Stomach (tissue), 19 donors: ENCODE measurements at regions of chr3 and their contacts with region 1.

Region 1: DNA sequence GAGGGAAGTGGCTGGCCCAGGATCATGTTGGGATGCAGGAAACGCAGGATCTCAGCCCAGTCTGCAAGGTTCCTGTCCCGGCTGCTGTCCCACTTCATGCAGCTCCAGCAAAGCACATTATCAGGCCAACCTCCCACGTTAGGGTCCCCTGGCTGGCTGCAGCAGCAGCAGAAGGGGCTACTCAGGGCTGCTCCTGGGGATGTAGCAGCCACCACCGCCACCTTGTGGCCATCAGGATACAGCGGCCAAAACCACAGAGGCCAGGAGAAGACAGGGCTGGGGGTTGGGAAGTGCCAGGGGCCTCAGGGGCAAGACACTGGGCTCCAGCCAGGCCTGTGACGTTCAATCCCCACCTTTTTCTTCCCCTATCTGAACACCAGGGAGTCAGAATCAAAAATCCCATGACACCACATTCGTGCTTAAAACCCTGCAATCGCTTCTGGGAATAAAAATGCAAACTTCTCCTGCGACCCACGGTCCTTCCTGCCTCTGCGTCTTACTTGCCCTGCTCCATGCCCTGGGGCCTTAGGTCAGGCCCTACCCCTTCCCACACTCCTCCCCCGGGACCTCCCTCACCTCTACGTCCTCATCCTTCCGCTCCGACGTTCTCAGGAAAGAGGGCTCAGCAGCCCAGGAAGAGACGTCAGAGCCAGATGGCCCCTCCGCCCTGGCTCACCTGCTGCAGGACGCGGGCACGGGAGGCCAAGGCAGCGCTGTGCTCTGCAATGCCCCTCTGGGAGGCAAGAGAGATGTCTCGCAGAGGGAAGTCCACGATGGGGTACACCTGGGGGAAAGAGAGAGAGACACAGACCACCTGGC is 21.5 kb downstream of the SSUH2 start:
- DNase-seq: peak; percentile 73 to 91
- H3K4me3 ChIP-seq: no peak overlapping the region
- H3K27ac ChIP-seq: no peak overlapping the region
- H3K4me1 ChIP-seq: peaks cover 0 to 17% (median 12%) of the 10 kb centered on the region in 4 donors
- H3K27me3 ChIP-seq: no peaks in the 10 kb centered on the region
- CTCF ChIP-seq: peak in 5 of 7 experiments; percentile 70 to 91 (median 83)
- EP300 ChIP-seq: no peak
- POLR2A ChIP-seq: no peak

Region 2: GRCh38 chr3:8441969-8442559 is 181.0 kb before region 1 on chr3:
- intact Hi-C with region 1: loop called (anchors 5 kb)
- DNase-seq: peak in 1 of 2 donors; percentile 87
- H3K4me3 ChIP-seq: no peak overlapping the region
- H3K27ac ChIP-seq: peak overlapping the region in 2 of 5 donors; percentile 83
- H3K4me1 ChIP-seq: peaks cover 23 to 42% (median 35%) of the 10 kb centered on the region in 4 donors
- H3K27me3 ChIP-seq: no peaks in the 10 kb centered on the region
- CTCF ChIP-seq: peak in 5 of 7 experiments; percentile 60 to 83 (median 76)
- EP300 ChIP-seq: no peak
- POLR2A ChIP-seq: no peak

Region 3: DNA sequence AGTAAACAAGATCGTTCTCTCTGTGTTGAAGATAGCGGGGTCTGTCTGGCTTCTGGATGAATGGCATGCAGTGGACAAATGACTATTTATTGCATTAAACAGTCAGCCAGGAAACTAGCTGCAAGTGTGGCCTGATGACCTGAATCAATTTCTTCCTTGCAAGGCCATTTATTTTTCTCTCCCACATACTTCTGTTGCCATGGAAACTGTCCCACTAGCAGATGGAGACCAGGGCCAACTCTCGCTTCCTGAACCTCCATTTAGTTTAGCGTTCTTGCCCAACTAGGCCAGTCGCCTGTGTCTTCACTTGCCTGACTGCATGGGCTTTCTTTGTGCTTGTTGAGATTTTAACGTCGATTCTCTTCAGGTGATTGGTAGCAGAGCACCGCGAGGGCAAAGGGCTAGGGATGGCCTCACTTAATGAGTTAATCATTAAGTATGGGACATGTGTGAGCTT is 93.9 kb before region 1 on chr3:
- intact Hi-C with region 1: no loop called
- DNase-seq: peak in 1 of 2 donors; percentile 80
- H3K4me3 ChIP-seq: no peak overlapping the region
- H3K27ac ChIP-seq: peak overlapping the region in 4 of 5 donors; percentile 43 to 75 (median 52)
- H3K4me1 ChIP-seq: peaks cover 27 to 39% (median 29%) of the 10 kb centered on the region in 4 donors
- H3K27me3 ChIP-seq: no peaks in the 10 kb centered on the region
- CTCF ChIP-seq: no peak
- EP300 ChIP-seq: no peak
- POLR2A ChIP-seq: no peak